Caco-2 (cell line): ENCODE measurements at regions of chr17 and their contacts with region 1.

Region 1: GRCh38 chr17:47941236-47941994 is at the start of gene PNPO:
- DNase-seq: peak; percentile 100
- H3K4me3 ChIP-seq: peak within 1 kb of the TSS; percentile 69
- H3K4me3 Mint-ChIP-seq: peak within 1 kb of the TSS; percentile 82
- H3K27ac Mint-ChIP-seq: peak within 1 kb of the TSS; percentile 75
- H3K4me1 ChIP-seq: peaks cover 12% of the 10 kb centered on the region; the same call in 1 of the 2 replicates
- H3K4me1 Mint-ChIP-seq: peaks cover 23% of the 10 kb centered on the region
- H3K27me3 ChIP-seq: no peaks in the 10 kb centered on the region
- H3K27me3 Mint-ChIP-seq: no peaks in the 10 kb centered on the region
- CTCF ChIP-seq: peak; percentile 45 to 48
- total RNA-seq, gene PNPO: 110 and 118 TPM in 2 replicates

Region 2: DNA sequence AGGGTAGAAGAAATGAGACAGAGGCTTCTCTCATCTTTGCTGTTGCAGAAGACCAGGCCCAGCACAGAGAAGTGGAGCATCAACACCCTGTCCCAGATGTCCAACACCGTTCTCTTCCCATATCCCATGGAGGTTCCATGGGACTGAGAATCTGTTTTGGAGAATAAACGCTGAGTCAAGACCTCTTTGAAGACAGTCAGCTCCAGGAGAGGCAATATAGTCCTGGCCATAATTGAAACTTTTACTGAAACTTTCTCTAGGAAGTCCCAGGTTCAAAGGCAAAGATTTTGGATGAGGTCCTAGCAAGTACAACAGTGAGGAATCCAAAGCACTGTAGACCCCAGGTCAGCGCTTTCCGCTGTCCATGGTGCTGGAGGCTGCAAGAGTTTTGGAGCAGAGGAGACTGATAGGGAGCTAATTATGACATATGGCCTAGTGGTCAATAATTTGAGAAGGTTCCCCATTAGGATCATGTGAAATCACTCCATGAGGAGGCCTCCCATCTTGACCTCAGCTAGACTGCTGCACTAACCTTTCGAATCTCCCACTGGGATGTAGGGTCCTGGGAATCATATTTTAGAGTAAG is 155.8 kb before region 1 on chr17:
- CTCF ChIA-PET with region 1: no interaction called
- POLR2A ChIA-PET with region 1: no interaction called
- intact Hi-C with region 1: no loop called
- DNase-seq: peak; percentile 78 to 89
- H3K4me3 ChIP-seq: no peak overlapping the region
- H3K4me3 Mint-ChIP-seq: no peak overlapping the region
- H3K27ac Mint-ChIP-seq: no peak overlapping the region
- H3K4me1 ChIP-seq: peaks cover 9% of the 10 kb centered on the region; the same call in 1 of the 2 replicates
- H3K4me1 Mint-ChIP-seq: peaks cover 13% of the 10 kb centered on the region
- H3K27me3 ChIP-seq: peaks cover 1% of the 10 kb centered on the region; the same call in 1 of the 2 replicates
- H3K27me3 Mint-ChIP-seq: peaks cover 38% of the 10 kb centered on the region
- CTCF ChIP-seq: no peak

Region 3: DNA sequence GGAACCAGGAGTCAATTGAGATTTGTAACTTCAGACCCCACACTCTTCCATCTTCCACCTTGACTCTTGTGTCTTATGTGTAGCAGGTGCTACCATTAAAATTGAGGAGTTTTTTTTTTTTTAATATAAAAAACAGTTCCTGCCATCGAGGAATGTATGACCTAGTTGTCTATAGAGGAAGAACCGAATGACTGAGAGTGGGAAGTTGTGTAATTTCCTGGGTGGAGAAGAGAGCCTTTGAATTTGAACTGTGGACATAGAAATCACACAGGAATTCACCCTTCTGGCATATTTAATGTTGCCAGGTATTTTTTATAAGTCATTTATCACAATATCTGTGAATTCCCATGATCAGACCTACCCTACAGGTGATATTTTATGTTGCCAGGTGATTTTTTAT is 23.4 kb before region 1 on chr17:
- CTCF ChIA-PET with region 1: interaction called, 3 read pairs
- POLR2A ChIA-PET with region 1: interaction called, 11 read pairs
- intact Hi-C with region 1: no loop called
- DNase-seq: no peak
- H3K4me3 ChIP-seq: no peak overlapping the region
- H3K4me3 Mint-ChIP-seq: no peak overlapping the region
- H3K27ac Mint-ChIP-seq: no peak overlapping the region
- H3K4me1 ChIP-seq: no peaks in the 10 kb centered on the region
- H3K4me1 Mint-ChIP-seq: no peaks in the 10 kb centered on the region
- H3K27me3 ChIP-seq: no peaks in the 10 kb centered on the region
- H3K27me3 Mint-ChIP-seq: no peaks in the 10 kb centered on the region
- CTCF ChIP-seq: no peak

Region 4: GRCh38 chr17:47929218-47930000 is 12.0 kb before region 1 on chr17:
- CTCF ChIA-PET with region 1: interaction called, 22 read pairs
- POLR2A ChIA-PET with region 1: interaction called, 12 read pairs
- intact Hi-C with region 1: no loop called
- DNase-seq: no peak
- H3K4me3 ChIP-seq: no peak overlapping the region
- H3K4me3 Mint-ChIP-seq: no peak overlapping the region
- H3K27ac Mint-ChIP-seq: no peak overlapping the region
- H3K4me1 ChIP-seq: no peaks in the 10 kb centered on the region
- H3K4me1 Mint-ChIP-seq: no peaks in the 10 kb centered on the region
- H3K27me3 ChIP-seq: no peaks in the 10 kb centered on the region
- H3K27me3 Mint-ChIP-seq: no peaks in the 10 kb centered on the region
- CTCF ChIP-seq: no peak

Region 5: GRCh38 chr17:47957591-47958428 is 16.4 kb after region 1 on chr17 and contains the start of gene PRR15L:
- CTCF ChIA-PET with region 1: interaction called, 66 read pairs
- POLR2A ChIA-PET with region 1: interaction called, 31 read pairs
- intact Hi-C with region 1: no loop called
- DNase-seq: peak; percentile 89 to 93
- H3K4me3 ChIP-seq: peak within 1 kb of the TSS; percentile 59
- H3K4me3 Mint-ChIP-seq: peak within 1 kb of the TSS; percentile 67
- H3K27ac Mint-ChIP-seq: peak within 1 kb of the TSS; percentile 35
- H3K4me1 ChIP-seq: peaks cover 67% of the 10 kb centered on the region
- H3K4me1 Mint-ChIP-seq: peaks cover 53% of the 10 kb centered on the region
- H3K27me3 ChIP-seq: no peaks in the 10 kb centered on the region
- H3K27me3 Mint-ChIP-seq: no peaks in the 10 kb centered on the region
- CTCF ChIP-seq: no peak
- total RNA-seq, gene PRR15L: 24.3 and 30.5 TPM in 2 replicates

Region 6: DNA sequence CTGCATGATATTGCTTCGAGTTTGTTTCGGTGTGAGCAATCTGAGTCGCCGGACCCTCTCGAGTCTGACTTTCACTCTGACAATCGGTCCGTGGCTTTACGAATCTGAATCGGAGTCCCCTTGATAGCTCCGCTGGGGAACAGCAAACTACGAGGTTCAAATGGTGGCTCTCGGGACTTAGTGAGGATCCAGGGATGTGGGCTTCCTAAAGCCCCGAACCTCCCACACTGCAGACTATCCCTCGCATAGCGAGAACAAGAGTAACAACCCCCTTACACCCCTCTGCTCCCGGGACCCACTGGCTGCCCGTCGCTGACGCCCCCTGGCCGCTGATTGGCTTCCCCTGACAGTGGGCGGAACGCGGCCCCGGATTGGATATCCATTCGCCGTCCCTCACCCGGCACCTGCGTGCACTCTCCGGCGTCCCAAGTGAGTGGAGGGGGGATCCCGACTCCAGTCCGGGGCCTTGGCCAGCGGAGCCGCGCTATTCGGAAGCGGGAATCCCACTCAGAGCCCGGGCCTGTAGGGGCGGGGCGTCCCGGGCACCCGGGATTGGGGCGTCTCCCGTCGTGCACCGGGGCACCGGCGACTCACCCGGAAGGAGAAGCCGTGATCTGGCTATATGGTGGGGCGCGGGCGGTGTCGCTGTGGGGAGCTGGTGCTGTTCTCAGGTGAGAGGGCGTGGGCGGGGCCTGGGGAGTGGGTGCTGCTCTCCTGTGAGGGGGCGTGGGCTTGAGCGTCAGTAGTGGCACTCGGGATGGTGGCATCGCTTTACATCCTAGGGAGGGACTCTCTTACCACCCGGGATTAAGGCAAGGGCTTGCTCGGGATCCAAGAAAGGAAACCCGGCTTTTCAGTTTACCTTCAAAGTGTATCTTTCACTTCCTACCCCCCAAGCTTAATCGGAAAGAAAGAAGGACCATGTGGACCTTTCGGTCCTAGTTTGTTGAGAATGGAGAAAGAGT is 166.0 kb after region 1 on chr17 and contains the start of gene SNX11:
- CTCF ChIA-PET with region 1: interaction called, 3 read pairs
- POLR2A ChIA-PET with region 1: interaction called, 10 read pairs
- intact Hi-C with region 1: no loop called
- DNase-seq: peak; percentile 100
- H3K4me3 ChIP-seq: peak within 1 kb of the TSS; percentile 60
- H3K4me3 Mint-ChIP-seq: peak within 1 kb of the TSS; percentile 95
- H3K27ac Mint-ChIP-seq: peak within 1 kb of the TSS; percentile 95
- H3K4me1 ChIP-seq: 0 out of 2 replicates have a peak, but pooled peaks cover 6% of the 10 kb centered on the region
- H3K4me1 Mint-ChIP-seq: peaks cover 7% of the 10 kb centered on the region
- H3K27me3 ChIP-seq: no peaks in the 10 kb centered on the region
- H3K27me3 Mint-ChIP-seq: no peaks in the 10 kb centered on the region
- CTCF ChIP-seq: peak; percentile 33 to 48
- total RNA-seq, gene SNX11: 36.7 and 40.7 TPM in 2 replicates

Region 7: GRCh38 chr17:48160177-48161081 is 219.0 kb after region 1 on chr17:
- CTCF ChIA-PET with region 1: no interaction called
- POLR2A ChIA-PET with region 1: no interaction called
- intact Hi-C with region 1: no loop called
- DNase-seq: peak; percentile 70 to 78
- H3K4me3 ChIP-seq: no peak overlapping the region
- H3K4me3 Mint-ChIP-seq: no peak overlapping the region
- H3K27ac Mint-ChIP-seq: peak overlapping the region; percentile 1
- H3K4me1 ChIP-seq: peaks cover 35% of the 10 kb centered on the region
- H3K4me1 Mint-ChIP-seq: peaks cover 45% of the 10 kb centered on the region
- H3K27me3 ChIP-seq: no peaks in the 10 kb centered on the region
- H3K27me3 Mint-ChIP-seq: no peaks in the 10 kb centered on the region
- CTCF ChIP-seq: no peak

Region 8: DNA sequence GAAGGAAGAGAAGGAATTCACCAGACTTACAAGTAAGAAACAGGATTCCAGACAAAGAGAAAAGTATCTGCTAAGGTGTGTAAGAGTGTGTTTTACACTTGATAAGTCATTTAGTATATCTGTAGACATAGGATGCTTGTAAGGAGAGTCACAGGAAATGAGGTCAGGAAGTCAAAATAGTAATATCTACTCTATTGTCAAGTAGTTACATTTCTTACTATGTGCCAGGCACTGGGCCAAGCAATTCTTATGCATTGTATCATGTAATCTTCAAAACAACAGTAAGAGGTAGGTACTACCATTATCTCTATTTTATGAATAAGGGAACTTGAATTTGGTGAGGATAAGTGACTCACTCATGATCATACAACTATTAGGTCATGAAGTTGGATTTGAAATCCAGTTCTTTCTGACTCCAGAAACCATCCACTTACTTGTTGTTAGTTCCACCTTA is 295.3 kb after region 1 on chr17:
- CTCF ChIA-PET with region 1: no interaction called
- POLR2A ChIA-PET with region 1: no interaction called
- intact Hi-C with region 1: no loop called
- DNase-seq: no peak
- H3K4me3 ChIP-seq: no peak overlapping the region
- H3K4me3 Mint-ChIP-seq: no peak overlapping the region
- H3K27ac Mint-ChIP-seq: no peak overlapping the region
- H3K4me1 ChIP-seq: peaks cover 20% of the 10 kb centered on the region
- H3K4me1 Mint-ChIP-seq: peaks cover 19% of the 10 kb centered on the region
- H3K27me3 ChIP-seq: no peaks in the 10 kb centered on the region
- H3K27me3 Mint-ChIP-seq: no peaks in the 10 kb centered on the region
- CTCF ChIP-seq: no peak